ENCODE measurements at regions of chr17 and their contacts with region 1.

Region 1: GRCh38 chr17:79400989-79401703 is 209.7 kb downstream of the RBFOX3 start:
- DNase-seq: peak; percentile 84
- H3K4me3 Mint-ChIP-seq: peak overlapping the region; percentile 68
- H3K27ac Mint-ChIP-seq: no peak overlapping the region
- H3K4me1 Mint-ChIP-seq: peaks cover 12% of the 10 kb centered on the region
- H3K27me3 Mint-ChIP-seq: peaks cover 30% of the 10 kb centered on the region

Region 2: DNA sequence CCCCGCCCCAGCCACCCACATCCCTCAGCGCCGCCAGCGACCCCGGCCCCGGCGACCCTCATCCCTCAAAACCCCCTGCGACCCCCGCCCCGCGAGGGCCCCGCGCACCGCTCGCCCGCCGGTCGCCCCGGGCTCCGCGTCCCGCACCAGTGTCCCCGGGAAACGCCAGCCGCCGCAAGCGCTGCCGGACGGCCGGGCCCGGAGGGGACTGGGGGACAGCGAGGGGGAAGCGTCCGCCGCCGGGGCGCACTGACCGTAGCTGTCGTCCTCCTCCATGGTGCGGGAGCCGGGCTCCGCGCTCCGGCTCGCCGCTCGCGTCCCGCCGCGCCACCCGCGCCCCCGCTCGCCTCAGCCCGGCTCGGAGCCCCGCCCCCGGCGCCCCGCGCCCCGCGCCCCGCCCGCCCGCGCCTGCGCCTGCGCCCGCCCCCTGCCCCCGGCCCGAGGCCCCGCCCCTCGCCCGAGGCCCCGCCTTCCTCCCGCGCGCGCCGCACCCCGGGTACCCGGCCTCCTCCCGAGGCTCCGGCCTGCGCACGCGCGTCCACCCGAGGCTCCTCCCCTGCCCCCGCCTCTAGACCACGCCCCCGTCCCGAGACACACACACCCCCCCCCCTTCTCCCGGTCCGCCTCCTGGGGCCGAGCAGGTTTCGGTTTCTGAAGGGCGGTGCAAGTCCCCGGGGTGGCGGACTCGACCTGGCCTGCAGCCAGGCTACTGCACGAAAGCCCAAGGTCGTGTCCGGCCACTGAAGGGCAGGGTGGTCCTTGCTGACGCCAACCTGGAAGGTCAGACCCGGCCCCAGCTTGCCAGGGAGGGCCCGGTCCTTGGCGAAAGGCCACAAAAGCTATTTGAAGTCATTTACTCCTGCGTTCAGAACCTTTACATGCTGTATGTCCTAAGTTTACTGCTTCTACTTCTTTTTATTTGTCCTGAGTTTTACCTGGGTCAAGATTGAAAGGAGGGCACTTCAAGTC is 618.9 kb before region 1 on chr17 and contains the start of gene CYTH1:
- CTCF ChIA-PET with region 1: no interaction called
- intact Hi-C with region 1: no loop called
- DNase-seq: peak; percentile 96
- H3K4me3 Mint-ChIP-seq: peak within 1 kb of the TSS; percentile 82
- H3K27ac Mint-ChIP-seq: peak within 1 kb of the TSS; percentile 97
- H3K4me1 Mint-ChIP-seq: peaks cover 50% of the 10 kb centered on the region
- H3K27me3 Mint-ChIP-seq: no peaks in the 10 kb centered on the region
- total RNA-seq, gene CYTH1: 145 to 149 TPM

Region 3: DNA sequence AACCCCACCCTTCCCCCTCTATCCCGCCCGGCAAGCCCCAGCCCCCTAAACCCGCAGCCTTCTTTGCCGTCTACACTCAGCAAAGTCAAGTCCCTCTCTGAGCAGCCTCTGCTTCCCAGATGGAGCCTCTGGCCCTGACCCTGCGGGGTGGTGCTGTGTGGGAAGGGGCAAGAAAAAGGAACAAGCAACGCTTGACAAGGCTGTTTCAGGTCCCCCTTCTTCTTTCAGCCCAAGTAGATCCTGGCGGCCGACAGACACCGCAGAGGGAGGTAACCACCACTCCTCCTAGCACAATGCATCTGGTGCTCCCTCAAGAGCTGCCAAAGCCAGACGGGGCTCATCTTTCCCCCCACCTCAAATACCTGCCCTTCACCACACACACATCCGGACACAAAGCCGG is 148.3 kb before region 1 on chr17:
- CTCF ChIA-PET with region 1: no interaction called
- intact Hi-C with region 1: no loop called
- DNase-seq: no peak
- H3K4me3 Mint-ChIP-seq: no peak overlapping the region
- H3K27ac Mint-ChIP-seq: no peak overlapping the region
- H3K4me1 Mint-ChIP-seq: no peaks in the 10 kb centered on the region
- H3K27me3 Mint-ChIP-seq: peaks cover 22% of the 10 kb centered on the region

Region 4: DNA sequence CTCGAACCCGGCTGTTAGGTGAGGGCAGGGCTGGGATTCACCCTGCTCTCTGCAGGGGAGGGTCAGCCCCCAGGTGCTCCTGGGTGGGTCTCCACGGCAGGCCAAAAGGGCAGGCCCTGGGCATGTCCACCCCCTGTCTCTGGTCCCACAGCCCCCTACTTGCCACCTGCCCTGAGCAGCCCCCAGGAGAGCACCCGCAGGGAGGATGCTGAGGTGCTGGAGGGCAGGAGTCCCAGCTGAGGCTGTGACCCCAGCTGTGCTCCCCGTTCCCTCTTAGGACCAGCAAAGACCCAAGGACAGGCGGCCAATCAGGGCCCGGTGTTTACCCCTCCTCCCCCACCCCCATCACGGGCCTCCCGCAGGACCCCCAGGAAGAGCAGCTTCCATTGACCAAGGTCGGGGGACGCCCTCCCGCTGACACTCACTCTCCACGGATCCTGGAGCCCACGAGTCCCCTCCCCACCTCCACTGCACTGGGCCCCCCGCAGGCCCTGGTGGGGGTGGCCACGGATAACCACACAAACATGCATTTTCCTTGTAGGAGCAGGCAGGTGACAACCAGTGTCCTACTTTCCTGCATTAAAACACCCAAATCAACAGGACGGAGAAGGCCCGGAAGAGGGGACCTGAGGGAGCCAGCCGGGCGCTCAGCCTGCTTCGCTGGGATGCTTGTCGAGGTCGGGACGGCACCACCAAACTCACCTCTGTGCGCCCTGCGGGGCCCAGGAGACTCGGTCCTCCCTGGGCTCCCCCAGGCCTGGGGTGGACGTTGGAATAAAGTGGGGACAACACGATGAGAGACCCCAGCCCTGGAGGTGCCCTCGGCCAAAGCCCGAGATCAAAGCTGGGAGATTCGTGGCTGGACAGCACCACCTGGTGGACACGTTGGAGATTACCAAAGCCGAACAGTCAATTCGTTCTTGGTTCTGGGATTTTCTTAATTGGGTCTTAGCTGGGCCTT is 307.1 kb after region 1 on chr17:
- CTCF ChIA-PET with region 1: no interaction called
- intact Hi-C with region 1: loop called (anchors 5 kb)
- DNase-seq: peak; percentile 75
- H3K4me3 Mint-ChIP-seq: no peak overlapping the region
- H3K27ac Mint-ChIP-seq: no peak overlapping the region
- H3K4me1 Mint-ChIP-seq: no peaks in the 10 kb centered on the region
- H3K27me3 Mint-ChIP-seq: no peaks in the 10 kb centered on the region